Ascending aorta (tissue), 2 donors: ENCODE measurements at regions of chr7 and their contacts with region 1.

Region 1: GRCh38 chr7:76291343-76292212 is 10.9 kb upstream of the HSPB1 start:
- DNase-seq: peak; percentile 81 to 97
- H3K4me3 ChIP-seq: peak overlapping the region; percentile 24 to 59
- H3K27ac ChIP-seq: peak overlapping the region; percentile 93 to 99
- H3K4me1 ChIP-seq: peaks cover 24 to 29% of the 10 kb centered on the region in 2 donors
- H3K27me3 ChIP-seq: no peaks in the 10 kb centered on the region
- CTCF ChIP-seq: peak; percentile 97 to 98 (median 97)

Region 2: DNA sequence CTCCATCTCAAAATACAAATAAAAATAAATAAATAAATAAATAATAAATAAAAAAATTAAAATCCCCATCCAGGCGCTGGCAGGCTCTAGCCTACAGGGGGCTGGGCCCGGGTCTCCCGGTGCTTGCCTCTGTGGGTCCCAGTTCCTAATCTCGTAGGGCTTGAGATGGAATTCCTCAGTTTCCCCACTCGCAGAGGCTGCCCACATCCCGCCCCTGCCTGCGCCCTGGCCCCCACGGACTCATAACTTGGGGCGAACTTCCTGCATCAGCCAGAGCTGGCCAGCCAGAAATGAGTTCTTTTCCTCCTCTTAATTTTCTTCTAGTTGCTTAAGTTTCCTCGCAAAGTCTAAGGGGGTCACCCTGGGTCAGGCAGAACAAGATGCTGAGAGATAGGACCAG is 111.9 kb before region 1 on chr7:
- intact Hi-C with region 1: loop called (anchors 1 kb)
- DNase-seq: no peak
- H3K4me3 ChIP-seq: no peak overlapping the region
- H3K27ac ChIP-seq: no peak overlapping the region
- H3K4me1 ChIP-seq: no peaks in the 10 kb centered on the region
- H3K27me3 ChIP-seq: no peaks in the 10 kb centered on the region
- CTCF ChIP-seq: no peak

Region 3: GRCh38 chr7:76302347-76303201 is 11.0 kb after region 1 on chr7 and contains the start of gene HSPB1:
- intact Hi-C with region 1: loop called (anchors 1 kb)
- DNase-seq: peak; percentile 90 to 99
- H3K4me3 ChIP-seq: peak within 1 kb of the TSS; percentile 86 to 99
- H3K27ac ChIP-seq: peak within 1 kb of the TSS; percentile 93 to 99
- H3K4me1 ChIP-seq: peaks cover 5 to 24% of the 10 kb centered on the region in 2 donors
- H3K27me3 ChIP-seq: no peaks in the 10 kb centered on the region
- CTCF ChIP-seq: peak in 1 of 3 experiments; percentile 23
- total RNA-seq, gene HSPB1: 3,584 TPM

Region 4: GRCh38 chr7:76359111-76359978 is 67.8 kb after region 1 on chr7:
- intact Hi-C with region 1: loop called (anchors 2 kb)
- DNase-seq: peak; percentile 93 to 98
- H3K4me3 ChIP-seq: peak overlapping the region; percentile 81 to 95
- H3K27ac ChIP-seq: peak overlapping the region; percentile 98 to 99
- H3K4me1 ChIP-seq: peaks cover 4 to 28% of the 10 kb centered on the region in 2 donors
- H3K27me3 ChIP-seq: no peaks in the 10 kb centered on the region
- CTCF ChIP-seq: peak; percentile 64 to 78 (median 72)